HepG2 (cell line): ENCODE measurements at regions of chr20 and their contacts with region 1.

Region 1: DNA sequence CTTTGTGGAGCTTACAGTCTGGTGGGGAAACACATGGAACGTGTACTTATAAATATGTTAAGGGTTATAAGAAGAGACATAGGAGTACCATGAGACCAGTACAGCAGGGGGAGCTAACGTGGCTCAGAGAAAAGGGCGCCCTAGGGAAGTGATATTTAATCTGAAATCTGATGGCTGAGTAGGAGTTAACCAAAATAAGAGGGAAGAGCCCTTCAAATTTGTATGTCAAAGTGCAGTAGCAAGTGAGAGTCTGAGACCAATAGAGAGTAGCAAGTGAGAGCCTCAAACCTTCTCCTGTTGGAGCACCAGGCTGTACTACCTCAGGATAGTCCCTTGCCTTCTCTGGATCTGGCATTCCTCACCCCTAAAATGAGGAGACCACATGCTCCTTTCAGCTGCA is 6.1 kb upstream of the PKIG start:
- DNase-seq: peak; percentile 21
- ATAC-seq: peak; percentile 72
- H3K4me3 ChIP-seq: no peak overlapping the region
- H3K27ac ChIP-seq: no peak overlapping the region
- H3K4me1 ChIP-seq: peaks cover 10% of the 10 kb centered on the region; the same call in 1 of the 2 replicates
- H3K27me3 ChIP-seq: no peaks in the 10 kb centered on the region
- CTCF ChIP-seq: peak; percentile 38
- EP300 ChIP-seq: no peak
- POLR2A ChIP-seq: no peak
- RAD21 ChIP-seq: no peak

Region 2: DNA sequence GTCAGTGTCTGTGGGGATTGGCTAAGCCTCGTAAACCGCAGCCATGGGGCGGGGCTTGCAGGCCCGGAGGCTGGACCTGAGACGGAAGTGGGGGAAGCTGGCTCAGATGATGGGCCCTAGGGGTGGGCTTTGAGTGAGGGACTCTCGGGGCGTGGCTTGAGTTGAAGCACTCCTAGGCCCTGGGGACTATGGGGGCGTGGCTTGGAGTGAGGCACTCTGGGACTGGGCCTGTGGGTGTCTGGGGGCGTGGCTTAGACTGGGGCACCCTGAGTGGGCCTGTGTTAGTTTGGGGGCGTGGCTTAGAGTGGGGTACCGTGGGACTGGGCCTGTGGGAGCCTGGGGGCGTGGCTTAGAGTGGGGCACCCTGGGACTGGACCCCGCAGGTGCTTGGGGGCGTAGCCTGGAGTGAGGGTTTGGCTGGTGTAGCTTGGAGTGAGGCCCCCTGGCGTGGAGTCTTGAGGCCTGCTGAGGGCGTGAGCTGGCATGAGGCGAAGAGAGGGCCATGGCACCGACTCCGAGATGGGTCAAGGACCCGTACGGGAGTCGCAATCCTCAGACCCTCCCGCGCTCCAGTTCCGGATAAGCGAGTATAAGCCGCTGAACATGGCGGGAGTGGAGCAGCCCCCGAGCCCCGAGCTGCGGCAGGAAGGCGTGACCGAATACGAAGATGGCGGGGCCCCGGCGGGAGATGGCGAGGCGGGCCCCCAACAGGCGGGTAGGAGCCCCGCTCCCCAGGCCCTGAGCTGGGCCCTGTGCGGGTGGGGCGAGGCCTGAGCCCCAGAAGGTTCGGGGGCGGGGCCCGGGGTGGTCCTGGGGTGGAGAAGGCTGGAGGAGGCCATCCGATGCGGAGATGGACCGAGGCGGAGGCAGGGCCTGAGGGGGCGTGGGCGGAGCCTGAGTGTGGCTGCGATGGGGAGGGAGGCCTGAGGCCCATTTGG is 1062.0 kb before region 1 on chr20:
- CTCF ChIA-PET with region 1: no interaction called
- POLR2A ChIA-PET with region 1: no interaction called
- in situ Hi-C with region 1: no loop called
- intact Hi-C with region 1: no loop called
- DNase-seq: peak; percentile 100
- ATAC-seq: peak; percentile 87
- H3K4me3 ChIP-seq: peak overlapping the region; percentile 62 to 84 (median 81)
- H3K27ac ChIP-seq: peak overlapping the region; percentile 16
- H3K4me1 ChIP-seq: peaks cover 26% of the 10 kb centered on the region
- H3K27me3 ChIP-seq: no peaks in the 10 kb centered on the region
- CTCF ChIP-seq: peak; percentile 80
- EP300 ChIP-seq: no peak
- POLR2A ChIP-seq: peak; percentile 65 to 89
- RAD21 ChIP-seq: peak; percentile 69

Region 3: DNA sequence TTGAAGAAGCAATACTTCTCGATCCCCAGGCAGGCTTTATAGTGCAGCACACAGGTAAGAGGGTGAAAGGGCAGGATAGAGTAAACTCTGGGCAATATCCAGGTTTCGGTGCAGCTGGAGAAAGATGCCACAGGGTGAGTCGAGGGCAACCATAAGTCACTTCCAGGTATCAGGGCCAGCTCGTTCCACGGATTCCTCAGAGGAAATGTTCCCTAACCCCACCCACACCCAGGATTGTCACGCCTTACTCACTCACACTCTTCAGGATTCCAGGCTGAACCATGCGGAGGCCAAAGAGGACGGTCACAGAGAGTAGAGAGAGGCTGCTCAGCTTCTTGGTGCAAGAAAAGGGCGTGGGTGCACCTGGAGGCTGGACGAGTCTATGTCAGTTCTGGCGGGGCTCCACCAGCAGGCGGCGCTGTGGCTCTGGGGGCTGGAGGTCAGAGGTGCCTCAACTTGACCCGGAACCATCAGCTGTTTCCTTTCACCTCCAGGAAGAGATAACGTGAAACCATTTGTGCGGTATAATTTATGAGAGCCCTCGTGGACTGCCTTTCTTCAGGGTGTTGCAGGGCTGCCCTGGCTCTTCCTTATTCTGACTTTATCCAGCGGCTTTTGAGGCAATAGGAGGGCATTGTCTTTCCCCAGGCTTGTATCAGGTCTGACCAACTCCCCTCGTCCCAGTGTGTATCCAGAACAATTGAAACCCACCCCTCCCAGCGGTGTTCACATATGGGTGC is 562.4 kb after region 1 on chr20:
- CTCF ChIA-PET with region 1: no interaction called
- POLR2A ChIA-PET with region 1: no interaction called
- in situ Hi-C with region 1: no loop called
- intact Hi-C with region 1: loop called (anchors 10 kb)
- DNase-seq: peak; percentile 34
- ATAC-seq: peak; percentile 91
- H3K4me3 ChIP-seq: no peak overlapping the region; a peak in 1 of 6 replicates
- H3K27ac ChIP-seq: no peak overlapping the region
- H3K4me1 ChIP-seq: peaks cover 8% of the 10 kb centered on the region
- H3K27me3 ChIP-seq: peaks cover 0 to 9% of the 10 kb centered on the region in 2 experiments; a peak in 4 of 5 replicates
- CTCF ChIP-seq: peak; percentile 85
- EP300 ChIP-seq: no peak
- POLR2A ChIP-seq: no peak
- RAD21 ChIP-seq: peak; percentile 74